Activated T-helper 2 cell treated with anti-CD3 and anti-CD28 coated beads, Interferon-gamma antibody, Interleukin-2, Interleukin-4, amounts not matched to agents 10 μg/mL and 5 μg/mL and 100 μg/mL, durations not matched to agents 14 hours and 24 hours and 36 hours (primary cell): ENCODE measurements at regions of chr13 and their contacts with region 1.

Region 1: GRCh38 chr13:30808589-30808988 is 73.2 kb downstream of the ALOX5AP start:
- DNase-seq: no peak
- H3K4me3 Mint-ChIP-seq: no peak overlapping the region
- H3K27ac Mint-ChIP-seq: no peak overlapping the region
- H3K4me1 Mint-ChIP-seq: peaks cover 7% of the 10 kb centered on the region
- H3K27me3 Mint-ChIP-seq: peaks cover 7% of the 10 kb centered on the region

Region 2: GRCh38 chr13:30186634-30187415 is 621.8 kb before region 1 on chr13:
- intact Hi-C with region 1: no loop called
- DNase-seq: no peak
- H3K4me3 Mint-ChIP-seq: no peak overlapping the region
- H3K27ac Mint-ChIP-seq: no peak overlapping the region
- H3K4me1 Mint-ChIP-seq: no peaks in the 10 kb centered on the region
- H3K27me3 Mint-ChIP-seq: no peaks in the 10 kb centered on the region

Region 3: GRCh38 chr13:30847650-30848307 is 39.2 kb after region 1 on chr13:
- intact Hi-C with region 1: loop called (anchors 2 kb)
- DNase-seq: no peak
- H3K4me3 Mint-ChIP-seq: no peak overlapping the region
- H3K27ac Mint-ChIP-seq: peak overlapping the region; percentile 5
- H3K4me1 Mint-ChIP-seq: peaks cover 17% of the 10 kb centered on the region
- H3K27me3 Mint-ChIP-seq: peaks cover 21% of the 10 kb centered on the region